MCF 10A (cell line): ENCODE measurements at regions of chr2 and their contacts with region 1.

Region 1: DNA sequence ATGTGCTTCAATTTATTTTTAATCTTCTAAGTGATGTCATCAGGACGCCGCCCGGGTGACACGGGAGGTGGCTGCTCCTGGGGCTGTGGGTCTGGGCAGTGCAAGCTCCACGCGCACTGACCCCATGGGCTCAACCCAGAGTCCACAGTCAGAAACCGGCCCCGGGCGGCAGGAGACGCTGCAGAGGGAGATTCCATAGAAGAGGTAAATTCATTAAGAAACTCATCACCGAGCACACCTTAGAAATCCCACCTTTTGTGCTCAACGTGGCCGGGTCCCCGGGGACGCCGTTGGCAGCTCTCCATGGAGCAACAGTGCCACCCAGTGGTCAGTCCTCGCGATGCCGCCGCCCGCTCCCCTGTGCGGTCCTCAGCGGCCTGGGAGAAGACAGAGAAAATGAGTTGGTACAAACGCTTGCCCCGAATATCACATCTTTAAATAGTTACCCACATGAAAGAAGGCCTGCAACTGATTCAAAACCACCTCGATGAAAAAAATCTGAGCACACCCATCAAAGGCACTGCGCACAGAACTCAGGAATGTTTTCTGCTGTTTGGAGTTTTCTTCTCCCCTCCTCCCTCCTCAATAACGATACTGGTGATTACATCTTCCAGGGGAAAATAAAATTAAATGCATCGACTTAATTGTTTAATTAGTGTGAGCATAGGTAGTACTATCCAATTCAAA is 92.6 kb downstream of the CMPK2 start:
- DNase-seq: peak; percentile 41
- H3K4me3 Mint-ChIP-seq: no peak overlapping the region
- H3K27ac Mint-ChIP-seq: no peak overlapping the region
- H3K4me1 Mint-ChIP-seq: no peaks in the 10 kb centered on the region
- H3K27me3 Mint-ChIP-seq: no peaks in the 10 kb centered on the region
- CTCF ChIP-seq: peak; percentile 84

Region 2: DNA sequence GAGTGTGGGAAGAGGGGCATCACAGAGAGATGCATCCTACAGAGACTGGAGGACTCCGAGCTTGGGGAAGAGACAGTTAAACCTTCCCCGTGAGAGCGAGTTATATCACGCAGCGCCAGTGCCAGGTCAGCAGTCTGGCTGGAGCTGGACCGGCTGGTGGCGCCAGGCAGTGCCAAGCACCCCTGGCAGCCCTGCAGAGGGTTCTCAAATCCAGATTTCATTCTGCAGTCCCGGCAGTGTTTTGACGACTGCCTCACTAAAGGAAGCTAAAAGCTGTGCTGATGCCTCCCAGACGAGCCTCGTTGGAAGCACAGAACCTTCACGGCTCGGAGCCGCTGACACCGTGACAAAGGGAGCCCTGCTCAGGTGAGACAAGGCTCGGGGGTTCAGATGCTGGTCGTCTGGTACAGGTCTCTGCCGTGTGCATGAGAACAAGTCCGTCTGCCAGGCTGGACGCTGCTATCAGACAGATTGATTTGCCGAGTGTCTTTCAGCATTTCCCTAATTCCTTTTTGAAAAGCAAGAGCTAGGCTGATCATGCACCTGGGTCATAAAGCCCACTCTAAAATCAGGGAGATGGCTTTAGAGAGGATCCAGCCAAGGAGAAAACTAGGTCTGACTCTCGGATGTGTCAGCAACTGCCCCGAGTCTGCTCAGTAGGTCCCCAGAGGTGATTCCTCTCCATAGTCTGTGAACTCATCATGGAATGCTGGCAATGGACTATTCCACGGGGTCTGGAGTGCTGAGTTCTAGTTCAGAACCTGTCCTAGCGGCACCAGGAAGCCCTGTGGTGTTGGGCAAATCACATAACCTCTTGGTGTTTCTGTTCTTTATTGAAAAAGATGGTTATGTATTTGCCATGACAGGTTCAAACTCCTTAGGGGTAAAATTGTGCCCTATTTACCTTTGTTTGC is 840.3 kb before region 1 on chr2:
- CTCF ChIA-PET with region 1: no interaction called
- POLR2A ChIA-PET with region 1: no interaction called
- intact Hi-C with region 1: loop called (anchors 2 kb)
- DNase-seq: no peak
- H3K4me3 Mint-ChIP-seq: peak overlapping the region; percentile 21
- H3K27ac Mint-ChIP-seq: no peak overlapping the region
- H3K4me1 Mint-ChIP-seq: no peaks in the 10 kb centered on the region
- H3K27me3 Mint-ChIP-seq: no peaks in the 10 kb centered on the region
- CTCF ChIP-seq: no peak

Region 3: GRCh38 chr2:6750411-6751158 is 22.6 kb before region 1 on chr2:
- CTCF ChIA-PET with region 1: interaction called, 22 read pairs
- POLR2A ChIA-PET with region 1: no interaction called
- intact Hi-C with region 1: no loop called
- DNase-seq: no peak
- H3K4me3 Mint-ChIP-seq: no peak overlapping the region
- H3K27ac Mint-ChIP-seq: no peak overlapping the region
- H3K4me1 Mint-ChIP-seq: no peaks in the 10 kb centered on the region
- H3K27me3 Mint-ChIP-seq: no peaks in the 10 kb centered on the region
- CTCF ChIP-seq: no peak